PC-9 (cell line): ENCODE measurements at regions of chr7 and their contacts with region 1.

Region 1: DNA sequence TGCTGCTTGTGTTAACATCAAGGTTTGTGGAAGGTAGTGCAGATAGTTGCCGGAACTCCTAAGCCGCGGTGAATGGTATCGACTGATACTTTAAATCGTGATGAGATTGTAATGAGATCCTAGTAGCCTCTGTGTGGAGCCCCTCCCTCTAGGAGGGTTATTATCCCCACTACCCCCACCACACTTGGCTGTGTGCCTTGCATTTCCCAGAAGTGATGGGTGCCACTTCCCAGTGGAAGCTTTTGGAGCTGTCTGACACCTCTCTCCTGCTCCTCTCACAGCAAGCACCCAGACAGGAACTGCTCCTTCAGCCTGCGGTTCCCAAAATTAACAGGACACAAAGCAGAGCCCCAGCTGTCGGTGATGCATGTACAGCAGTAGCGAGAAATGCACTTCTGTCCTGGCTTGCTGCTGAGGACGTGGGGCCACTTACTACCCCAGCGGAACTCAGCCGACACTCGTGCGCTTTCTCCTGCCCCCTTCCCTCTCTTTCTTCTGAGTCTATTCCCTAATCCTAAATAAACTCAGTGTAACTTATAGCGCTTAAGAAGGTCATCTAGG is 52.5 kb downstream of the PRKAG2 start:
- DNase-seq: no peak
- H3K4me3 ChIP-seq: no peak overlapping the region
- H3K27ac ChIP-seq: no peak overlapping the region
- H3K4me1 ChIP-seq: peaks cover 12% of the 10 kb centered on the region
- H3K27me3 ChIP-seq: 0 out of 2 replicates have a peak, but pooled peaks cover 24% of the 10 kb centered on the region
- CTCF ChIP-seq: no peak

Region 2: DNA sequence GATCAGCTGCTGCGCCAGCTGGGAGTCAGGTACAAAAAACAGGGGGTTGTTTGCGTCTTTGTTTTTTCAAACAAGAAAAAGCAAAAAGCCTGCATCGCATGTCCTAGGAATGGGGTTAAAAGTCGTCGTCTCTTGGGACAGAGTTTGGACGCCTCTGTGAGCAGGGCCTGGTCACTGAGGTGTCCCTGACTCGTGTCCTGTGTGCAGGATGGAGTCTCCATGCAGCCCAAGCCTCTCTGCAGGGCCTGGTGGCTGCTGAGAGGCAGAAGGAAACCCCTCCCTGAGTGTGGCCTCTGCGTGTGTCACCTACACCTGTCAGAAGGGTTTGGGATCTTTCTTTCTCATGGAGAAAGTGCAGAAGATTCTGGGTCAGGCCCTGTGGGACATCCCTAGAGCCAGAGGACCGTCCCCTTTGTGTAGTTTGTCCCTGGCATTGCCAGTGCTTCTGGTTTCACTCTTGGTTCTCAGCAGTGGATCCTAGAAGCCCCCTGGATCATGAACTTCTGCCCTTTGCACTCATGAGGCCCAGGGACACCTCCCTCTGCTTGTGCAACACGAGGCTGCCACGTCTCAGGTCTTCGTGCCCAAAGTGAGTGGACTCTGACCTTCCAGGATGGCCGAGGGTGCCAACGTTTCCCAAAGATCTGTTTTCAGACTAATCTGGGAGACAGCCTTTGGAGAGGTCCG is 22.5 kb before region 1 on chr7:
- CTCF ChIA-PET with region 1: no interaction called
- POLR2A ChIA-PET with region 1: interaction called, 10 read pairs
- intact Hi-C with region 1: no loop called
- DNase-seq: no peak
- H3K4me3 ChIP-seq: no peak overlapping the region
- H3K27ac ChIP-seq: no peak overlapping the region
- H3K4me1 ChIP-seq: peaks cover 16% of the 10 kb centered on the region
- H3K27me3 ChIP-seq: no peaks in the 10 kb centered on the region; the same call in 1 of the 2 replicates
- CTCF ChIP-seq: no peak

Region 3: DNA sequence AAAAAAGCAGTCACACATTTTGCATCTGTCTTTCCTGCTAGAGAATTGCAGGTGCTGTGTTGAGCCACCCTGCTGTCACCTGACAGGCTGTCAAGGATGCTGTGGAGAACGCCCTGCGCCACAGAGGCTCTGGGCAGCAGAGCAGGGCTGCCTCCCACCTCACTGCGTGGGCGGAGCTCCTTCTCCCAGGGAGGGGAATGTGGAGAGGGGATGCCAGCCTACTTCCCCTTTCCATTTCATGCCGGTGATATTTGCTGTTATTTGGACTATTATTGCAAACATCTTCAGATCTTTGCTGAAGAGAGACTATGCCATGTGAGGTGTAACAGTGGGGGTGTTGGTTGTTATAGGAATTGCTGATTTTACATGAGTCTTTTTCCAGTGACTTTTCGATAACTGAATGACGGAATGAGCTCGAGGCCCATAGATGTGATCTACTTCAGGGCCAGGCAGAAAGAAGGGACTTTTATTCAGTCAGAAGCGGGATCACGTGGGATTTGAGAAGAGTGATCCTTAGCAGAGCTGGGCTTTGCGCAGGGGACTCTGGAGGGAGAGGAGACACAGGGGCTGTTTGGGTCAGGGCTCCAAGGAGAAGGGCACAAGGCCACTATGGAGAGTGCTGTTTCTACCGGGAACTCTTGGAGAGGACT is 66.0 kb after region 1 on chr7:
- CTCF ChIA-PET with region 1: no interaction called
- POLR2A ChIA-PET with region 1: no interaction called
- intact Hi-C with region 1: no loop called
- DNase-seq: no peak
- H3K4me3 ChIP-seq: no peak overlapping the region
- H3K27ac ChIP-seq: no peak overlapping the region
- H3K4me1 ChIP-seq: no peaks in the 10 kb centered on the region
- H3K27me3 ChIP-seq: peaks cover 97% of the 10 kb centered on the region
- CTCF ChIP-seq: no peak